ENCODE measurements at regions of chr6 and their contacts with region 1.

Region 1: GRCh38 chr6:31952140-31952805 is 6.4 kb downstream of the CFB start:
- DNase-seq: peak; percentile 57
- H3K4me3 ChIP-seq: no peak overlapping the region
- H3K27ac ChIP-seq: no peak overlapping the region
- H3K4me1 ChIP-seq: no peaks in the 10 kb centered on the region
- H3K27me3 ChIP-seq: no peaks in the 10 kb centered on the region
- CTCF ChIP-seq: peak; percentile 82 to 83
- POLR2A ChIP-seq: no peak

Region 2: GRCh38 chr6:31862344-31863227 is 89.7 kb before region 1 on chr6 and contains the start of gene NEU1:
- CTCF ChIA-PET with region 1: interaction called, 11 read pairs
- POLR2A ChIA-PET with region 1: no interaction called
- dilution Hi-C with region 1: no loop called
- intact Hi-C with region 1: no loop called
- DNase-seq: peak; percentile 100
- H3K4me3 ChIP-seq: peak within 1 kb of the TSS; percentile 71 to 88 (median 83)
- H3K27ac ChIP-seq: peak within 1 kb of the TSS; percentile 77
- H3K4me1 ChIP-seq: peaks cover 7% of the 10 kb centered on the region
- H3K27me3 ChIP-seq: no peaks in the 10 kb centered on the region
- CTCF ChIP-seq: no peak
- POLR2A ChIP-seq: peak; percentile 99
- total RNA-seq, gene NEU1: 61.3 and 62.8 TPM in 2 replicates

Region 3: GRCh38 chr6:31888276-31889258 is 63.7 kb before region 1 on chr6:
- CTCF ChIA-PET with region 1: interaction called, 10 read pairs
- POLR2A ChIA-PET with region 1: no interaction called
- dilution Hi-C with region 1: no loop called
- intact Hi-C with region 1: no loop called
- DNase-seq: no peak
- H3K4me3 ChIP-seq: no peak overlapping the region
- H3K27ac ChIP-seq: no peak overlapping the region
- H3K4me1 ChIP-seq: no peaks in the 10 kb centered on the region
- H3K27me3 ChIP-seq: no peaks in the 10 kb centered on the region
- CTCF ChIP-seq: peak; percentile 72 to 74
- POLR2A ChIP-seq: no peak

Region 4: DNA sequence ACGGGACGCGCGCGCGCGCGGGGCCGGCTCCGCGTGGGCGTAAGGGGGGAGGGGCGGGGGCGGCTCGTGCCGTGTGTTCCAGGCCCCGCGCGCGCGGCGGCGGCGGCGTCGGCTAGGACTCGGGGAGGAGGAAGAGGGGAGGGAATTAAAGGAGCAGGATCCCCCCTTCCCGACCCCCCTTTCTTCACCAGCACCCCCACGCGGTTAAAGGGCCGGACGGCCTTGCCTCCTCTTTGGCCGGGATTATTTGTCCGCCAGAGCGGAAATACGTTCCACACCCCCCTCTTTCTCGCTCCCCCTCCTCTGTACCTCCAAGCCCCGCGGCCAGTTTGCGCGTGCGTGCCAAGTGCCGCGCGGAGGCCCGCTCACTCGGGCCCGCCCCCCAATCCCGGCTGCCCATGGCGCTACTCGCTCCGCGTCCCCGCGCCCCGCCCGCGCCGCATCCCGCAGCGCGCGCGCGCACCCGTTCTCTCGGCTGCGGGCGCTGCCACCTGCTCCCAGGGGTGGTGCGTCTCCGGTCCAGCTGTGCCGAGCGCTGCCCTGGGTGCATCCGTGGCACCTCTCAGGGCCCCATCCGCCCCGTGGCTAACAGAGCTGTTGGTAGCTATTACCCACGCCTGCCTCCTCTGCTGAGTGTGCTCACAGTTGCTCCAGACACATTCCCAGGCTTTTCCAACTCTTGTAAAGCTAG is 50.2 kb before region 1 on chr6 and contains the start of gene ZBTB12:
- CTCF ChIA-PET with region 1: interaction called, 31 read pairs
- POLR2A ChIA-PET with region 1: no interaction called
- dilution Hi-C with region 1: no loop called
- intact Hi-C with region 1: loop called (anchors 2 kb)
- DNase-seq: peak; percentile 95
- H3K4me3 ChIP-seq: peak within 1 kb of the TSS; percentile 18 to 77 (median 45)
- H3K27ac ChIP-seq: no peak within 1 kb of the TSS
- H3K4me1 ChIP-seq: peaks cover 9% of the 10 kb centered on the region
- H3K27me3 ChIP-seq: peaks cover 5 to 12% of the 10 kb centered on the region in 2 experiments
- CTCF ChIP-seq: no peak
- POLR2A ChIP-seq: peak; percentile 56
- total RNA-seq, gene ZBTB12: 3.5 and 4.9 TPM in 2 replicates

Region 5: DNA sequence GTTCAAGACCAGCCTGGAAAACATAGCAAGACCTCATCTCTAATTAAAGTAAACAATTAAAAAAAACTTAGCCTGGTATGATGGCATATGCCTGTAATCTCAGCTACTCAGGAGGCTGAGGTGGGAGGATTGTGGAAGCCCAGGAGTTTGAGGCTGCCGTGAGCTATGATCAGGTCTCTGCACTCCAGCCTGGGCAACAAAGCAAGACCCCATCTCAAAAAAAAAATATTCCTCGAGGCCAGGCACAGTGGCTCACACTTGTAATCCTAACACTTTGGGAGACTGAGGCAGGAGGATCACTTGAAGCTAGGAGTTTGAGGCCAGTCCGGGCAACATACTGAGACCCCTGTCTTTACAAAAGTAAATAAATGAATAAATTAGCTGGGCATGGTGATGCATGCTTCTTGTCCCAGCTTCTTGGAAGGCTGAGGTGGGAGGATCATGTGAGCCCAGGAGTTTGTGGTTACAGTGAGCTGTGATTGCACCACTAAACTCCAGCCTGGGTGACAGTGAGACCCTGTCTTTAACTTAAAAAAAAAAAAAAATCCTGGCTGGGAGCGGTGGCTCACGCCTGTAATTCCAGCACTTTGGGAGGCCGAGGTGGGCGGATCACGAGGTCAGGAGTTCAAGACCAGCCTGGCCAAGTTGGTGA is 34.1 kb before region 1 on chr6:
- CTCF ChIA-PET with region 1: interaction called, 11 read pairs
- POLR2A ChIA-PET with region 1: no interaction called
- dilution Hi-C with region 1: no loop called
- intact Hi-C with region 1: no loop called
- DNase-seq: no peak
- H3K4me3 ChIP-seq: no peak overlapping the region
- H3K27ac ChIP-seq: no peak overlapping the region
- H3K4me1 ChIP-seq: no peaks in the 10 kb centered on the region
- H3K27me3 ChIP-seq: no peaks in the 10 kb centered on the region
- CTCF ChIP-seq: no peak
- POLR2A ChIP-seq: no peak

Region 6: GRCh38 chr6:31940256-31940664 is 12.0 kb before region 1 on chr6:
- CTCF ChIA-PET with region 1: interaction called, 19 read pairs
- POLR2A ChIA-PET with region 1: no interaction called
- dilution Hi-C with region 1: no loop called
- intact Hi-C with region 1: no loop called
- DNase-seq: no peak
- H3K4me3 ChIP-seq: no peak overlapping the region
- H3K27ac ChIP-seq: no peak overlapping the region
- H3K4me1 ChIP-seq: no peaks in the 10 kb centered on the region
- H3K27me3 ChIP-seq: peaks cover 3 to 11% of the 10 kb centered on the region in 2 experiments
- CTCF ChIP-seq: no peak
- POLR2A ChIP-seq: no peak

Measured in endothelial cell of umbilical vein (primary cell).